ENCODE measurements at regions of chr16 and their contacts with region 1.

Region 1: DNA sequence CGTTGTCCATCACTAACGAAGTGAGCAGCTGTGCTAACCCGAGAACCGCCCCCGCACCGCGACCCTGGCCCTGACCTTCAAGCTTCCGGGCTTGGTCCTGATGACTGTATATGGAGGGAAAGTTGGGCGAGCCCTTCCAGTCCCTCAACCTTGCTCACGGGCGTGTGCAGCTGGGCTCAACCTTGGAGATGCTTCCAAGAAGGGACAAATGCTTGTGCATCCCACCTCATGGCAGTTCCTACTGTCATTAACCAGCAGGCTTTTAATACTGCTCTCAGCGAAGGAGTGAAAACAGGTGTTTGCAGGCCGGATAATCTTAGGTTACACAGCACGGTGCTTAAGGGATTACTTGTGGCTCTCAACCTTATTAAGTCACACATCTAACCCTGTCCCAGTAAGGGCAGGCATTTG is 33.5 kb downstream of the SRL start:
- DNase-seq: no peak
- H3K4me3 ChIP-seq: no peak overlapping the region
- H3K27ac ChIP-seq: no peak overlapping the region
- H3K4me1 ChIP-seq: peaks cover 9% of the 10 kb centered on the region
- H3K27me3 ChIP-seq: no peaks in the 10 kb centered on the region
- CTCF ChIP-seq: no peak

Region 2: GRCh38 chr16:4166821-4167220 is 41.5 kb before region 1 on chr16:
- CTCF ChIA-PET with region 1: no interaction called
- dilution Hi-C with region 1: loop called (anchors 5 kb)
- in situ Hi-C with region 1: no loop called
- intact Hi-C with region 1: no loop called
- DNase-seq: no peak
- H3K4me3 ChIP-seq: no peak overlapping the region
- H3K27ac ChIP-seq: no peak overlapping the region
- H3K4me1 ChIP-seq: no peaks in the 10 kb centered on the region
- H3K27me3 ChIP-seq: no peaks in the 10 kb centered on the region
- CTCF ChIP-seq: no peak

Measured in mammary epithelial cell (primary cell).